A549 (cell line): ENCODE measurements at regions of chr2 and their contacts with region 1.

Region 1: GRCh38 chr2:95121407-95122196 is at the start of gene MRPS5:
- DNase-seq: peak; percentile 76 to 81
- ATAC-seq: peak; percentile 97 to 98
- H3K4me3 ChIP-seq: peak within 1 kb of the TSS; percentile 90
- H3K27ac ChIP-seq: peak within 1 kb of the TSS; percentile 87 to 96
- H3K4me1 ChIP-seq: peaks cover 6% of the 10 kb centered on the region; the same call in 2 of the 3 replicates
- CTCF ChIP-seq: no peak; the same call in 2 of the 3 replicates
- EP300 ChIP-seq: no peak
- POLR2A ChIP-seq: peak; percentile 74
- RAD21 ChIP-seq: no peak
- polyA plus RNA-seq, gene MRPS5: 96.4 and 123 TPM in 2 replicates

Region 2: GRCh38 chr2:95043300-95044093 is 78.1 kb before region 1 on chr2:
- CTCF ChIA-PET with region 1: no interaction called
- POLR2A ChIA-PET with region 1: no interaction called
- DNase-seq: no peak
- ATAC-seq: peak; percentile 59 to 61; a peak in 5 of 6 replicates
- H3K4me3 ChIP-seq: no peak overlapping the region
- H3K27ac ChIP-seq: no peak overlapping the region
- H3K4me1 ChIP-seq: no peaks in the 10 kb centered on the region
- CTCF ChIP-seq: no peak
- EP300 ChIP-seq: no peak
- POLR2A ChIP-seq: no peak
- RAD21 ChIP-seq: no peak

Region 3: GRCh38 chr2:95149397-95149984 is 27.9 kb after region 1 on chr2:
- CTCF ChIA-PET with region 1: no interaction called
- POLR2A ChIA-PET with region 1: no interaction called
- DNase-seq: peak in 1 of 2 experiments; percentile 22
- ATAC-seq: no peak
- H3K4me3 ChIP-seq: no peak overlapping the region
- H3K27ac ChIP-seq: no peak overlapping the region
- H3K4me1 ChIP-seq: no peaks in the 10 kb centered on the region
- CTCF ChIP-seq: no peak
- EP300 ChIP-seq: no peak
- POLR2A ChIP-seq: no peak
- RAD21 ChIP-seq: no peak

Region 4: DNA sequence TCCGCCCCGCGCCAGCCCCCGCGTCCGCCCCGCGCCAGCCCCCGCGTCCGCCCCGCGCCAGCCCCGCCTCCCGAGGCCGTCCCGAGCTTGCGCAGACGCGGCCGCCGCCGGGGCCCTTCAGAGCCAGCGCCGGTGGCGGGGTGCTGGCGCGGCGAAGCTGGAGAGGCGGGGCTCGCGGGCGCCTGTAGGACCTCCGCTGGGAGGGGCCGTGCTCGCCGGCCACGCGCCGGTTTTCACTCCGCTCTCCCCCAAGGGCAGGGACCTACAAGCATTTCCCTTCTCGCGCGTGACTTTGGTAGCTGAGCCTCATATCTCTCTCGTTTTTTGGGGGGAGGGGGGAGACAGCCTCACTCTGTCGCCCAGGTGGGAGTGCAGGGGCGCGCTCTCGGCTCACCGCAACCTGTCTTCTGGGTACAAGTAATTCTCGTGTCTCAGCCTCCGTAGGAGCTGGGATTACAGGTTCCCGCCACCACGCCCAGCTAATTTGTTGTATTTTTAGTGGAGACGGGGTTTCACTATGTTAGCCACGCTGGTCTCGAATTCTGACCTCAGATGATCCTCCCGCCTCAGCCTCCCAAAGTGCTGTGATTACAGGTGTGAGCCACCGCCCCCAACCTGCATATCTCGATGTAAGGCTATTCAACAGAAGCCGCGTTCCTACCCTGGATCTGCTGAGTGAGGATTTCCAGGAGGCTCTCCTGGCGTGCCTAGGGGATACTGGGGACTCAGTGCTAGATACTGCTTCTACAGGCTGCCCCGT is 38.3 kb after region 1 on chr2 and contains the start of gene ZNF514:
- CTCF ChIA-PET with region 1: interaction called, 4 read pairs
- POLR2A ChIA-PET with region 1: interaction called, 22 read pairs
- DNase-seq: peak; percentile 56 to 71
- ATAC-seq: peak; percentile 91 to 93
- H3K4me3 ChIP-seq: peak within 1 kb of the TSS; percentile 43
- H3K27ac ChIP-seq: peak within 1 kb of the TSS; percentile 56 to 89
- H3K4me1 ChIP-seq: peaks cover 5% of the 10 kb centered on the region; the same call in 2 of the 3 replicates
- CTCF ChIP-seq: no peak
- EP300 ChIP-seq: no peak
- POLR2A ChIP-seq: peak; percentile 23; the same call in 1 of the 2 replicates
- RAD21 ChIP-seq: no peak
- polyA plus RNA-seq, gene ZNF514: 14.0 and 15.0 TPM in 2 replicates

Region 5: DNA sequence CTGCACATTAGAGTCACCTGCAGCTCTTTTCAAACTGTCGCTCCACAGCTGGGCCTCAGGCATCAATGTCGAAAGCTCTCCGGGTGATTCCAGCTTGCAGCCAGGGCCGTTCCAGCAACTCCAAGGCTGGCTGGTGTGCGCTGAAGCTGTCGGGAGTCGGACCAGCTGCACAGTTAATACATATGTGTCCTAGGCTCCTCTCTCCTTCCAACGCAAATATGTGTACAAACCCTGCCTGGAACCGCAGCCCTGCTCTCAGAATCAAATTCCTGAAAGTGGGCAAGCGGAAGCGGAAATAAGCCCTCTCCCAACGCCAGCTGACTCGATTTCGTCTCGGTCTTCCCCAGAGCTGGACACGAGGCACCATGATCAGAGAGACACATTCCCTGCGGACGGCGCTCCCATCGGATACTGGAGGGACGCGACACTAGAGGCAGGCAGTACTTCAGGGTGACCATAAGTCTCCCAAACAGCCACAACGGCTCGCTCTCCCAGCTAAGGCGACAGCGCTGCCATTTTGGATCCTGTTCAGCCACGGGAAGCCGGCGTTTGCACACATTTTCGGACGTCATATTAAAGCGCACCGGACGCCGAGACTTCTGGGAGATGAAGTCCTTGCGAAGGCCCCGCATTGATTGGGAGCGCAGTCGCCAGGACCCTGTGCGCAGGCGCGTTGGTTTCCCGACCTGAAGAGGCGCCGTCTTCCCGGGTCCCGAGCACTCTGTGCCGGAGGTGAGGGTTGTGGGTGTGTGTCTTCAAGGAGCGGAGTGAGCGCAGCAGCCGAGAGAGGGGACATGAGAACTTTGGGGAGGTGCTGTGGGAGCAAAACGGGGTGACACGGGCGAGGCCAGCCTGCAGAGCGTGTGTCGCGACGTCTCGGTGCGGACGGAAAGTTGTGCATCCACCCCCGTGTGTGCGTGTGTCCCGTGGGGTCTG is 43.8 kb after region 1 on chr2 and contains the start of gene ZNF2:
- CTCF ChIA-PET with region 1: interaction called, 4 read pairs
- POLR2A ChIA-PET with region 1: interaction called, 22 read pairs
- DNase-seq: peak; percentile 99
- ATAC-seq: peak; percentile 97 to 99
- H3K4me3 ChIP-seq: peak within 1 kb of the TSS; percentile 55
- H3K27ac ChIP-seq: peak within 1 kb of the TSS; percentile 87 to 88
- H3K4me1 ChIP-seq: peaks cover 5% of the 10 kb centered on the region; the same call in 2 of the 3 replicates
- CTCF ChIP-seq: no peak
- EP300 ChIP-seq: no peak
- POLR2A ChIP-seq: peak; percentile 78
- RAD21 ChIP-seq: no peak
- polyA plus RNA-seq, gene ZNF2: 4.6 and 5.5 TPM in 2 replicates